CD8-positive, alpha-beta T cell (primary cell): ENCODE measurements at regions of chr2 and their contacts with region 1.

Region 1: GRCh38 chr2:200811336-200812121 is at the start of gene BZW1:
- DNase-seq: peak; percentile 94 to 98 (median 97)
- ATAC-seq: peak; percentile 82
- H3K4me3 ChIP-seq: peak within 1 kb of the TSS; percentile 69 to 90
- H3K4me3 Mint-ChIP-seq: peak within 1 kb of the TSS; percentile 99
- H3K27ac ChIP-seq: peak within 1 kb of the TSS; percentile 98
- H3K27ac Mint-ChIP-seq: peak within 1 kb of the TSS; percentile 98
- H3K4me1 ChIP-seq: peaks cover 33% of the 10 kb centered on the region
- H3K4me1 Mint-ChIP-seq: peaks cover 48% of the 10 kb centered on the region
- H3K27me3 ChIP-seq: no peaks in the 10 kb centered on the region
- H3K27me3 Mint-ChIP-seq: no peaks in the 10 kb centered on the region
- CTCF ChIP-seq: no peak
- total RNA-seq, gene BZW1: 330 to 338 TPM

Region 2: GRCh38 chr2:198945496-198945895 is 1866.0 kb before region 1 on chr2:
- CTCF ChIA-PET with region 1: no interaction called
- POLR2A ChIA-PET with region 1: no interaction called
- intact Hi-C with region 1: no loop called
- DNase-seq: no peak
- ATAC-seq: no peak
- H3K4me3 ChIP-seq: no peak overlapping the region
- H3K4me3 Mint-ChIP-seq: no peak overlapping the region
- H3K27ac ChIP-seq: no peak overlapping the region
- H3K27ac Mint-ChIP-seq: no peak overlapping the region
- H3K4me1 ChIP-seq: no peaks in the 10 kb centered on the region
- H3K4me1 Mint-ChIP-seq: no peaks in the 10 kb centered on the region
- H3K27me3 ChIP-seq: no peaks in the 10 kb centered on the region
- H3K27me3 Mint-ChIP-seq: no peaks in the 10 kb centered on the region
- CTCF ChIP-seq: no peak

Region 3: GRCh38 chr2:198991431-198991830 is 1820.1 kb before region 1 on chr2:
- CTCF ChIA-PET with region 1: no interaction called
- POLR2A ChIA-PET with region 1: no interaction called
- intact Hi-C with region 1: no loop called
- DNase-seq: no peak
- ATAC-seq: no peak
- H3K4me3 ChIP-seq: no peak overlapping the region
- H3K4me3 Mint-ChIP-seq: no peak overlapping the region
- H3K27ac ChIP-seq: no peak overlapping the region
- H3K27ac Mint-ChIP-seq: no peak overlapping the region
- H3K4me1 ChIP-seq: no peaks in the 10 kb centered on the region
- H3K4me1 Mint-ChIP-seq: no peaks in the 10 kb centered on the region
- H3K27me3 ChIP-seq: no peaks in the 10 kb centered on the region
- H3K27me3 Mint-ChIP-seq: no peaks in the 10 kb centered on the region
- CTCF ChIP-seq: no peak

Region 4: GRCh38 chr2:199911052-199911876 is 900.3 kb before region 1 on chr2 and contains the start of gene C2orf69:
- CTCF ChIA-PET with region 1: no interaction called
- POLR2A ChIA-PET with region 1: no interaction called
- intact Hi-C with region 1: loop called in 1 of 2 experiments (anchors 5 kb)
- DNase-seq: peak; percentile 80 to 96 (median 91)
- ATAC-seq: peak; percentile 78
- H3K4me3 ChIP-seq: peak within 1 kb of the TSS; percentile 82 to 83
- H3K4me3 Mint-ChIP-seq: peak within 1 kb of the TSS; percentile 99
- H3K27ac ChIP-seq: peak within 1 kb of the TSS; percentile 84 to 93
- H3K27ac Mint-ChIP-seq: peak within 1 kb of the TSS; percentile 95
- H3K4me1 ChIP-seq: peaks cover 28% of the 10 kb centered on the region
- H3K4me1 Mint-ChIP-seq: peaks cover 38% of the 10 kb centered on the region
- H3K27me3 ChIP-seq: no peaks in the 10 kb centered on the region
- H3K27me3 Mint-ChIP-seq: peaks cover 6% of the 10 kb centered on the region
- CTCF ChIP-seq: no peak
- total RNA-seq, gene C2orf69: 16.3 to 17.5 TPM

Region 5: DNA sequence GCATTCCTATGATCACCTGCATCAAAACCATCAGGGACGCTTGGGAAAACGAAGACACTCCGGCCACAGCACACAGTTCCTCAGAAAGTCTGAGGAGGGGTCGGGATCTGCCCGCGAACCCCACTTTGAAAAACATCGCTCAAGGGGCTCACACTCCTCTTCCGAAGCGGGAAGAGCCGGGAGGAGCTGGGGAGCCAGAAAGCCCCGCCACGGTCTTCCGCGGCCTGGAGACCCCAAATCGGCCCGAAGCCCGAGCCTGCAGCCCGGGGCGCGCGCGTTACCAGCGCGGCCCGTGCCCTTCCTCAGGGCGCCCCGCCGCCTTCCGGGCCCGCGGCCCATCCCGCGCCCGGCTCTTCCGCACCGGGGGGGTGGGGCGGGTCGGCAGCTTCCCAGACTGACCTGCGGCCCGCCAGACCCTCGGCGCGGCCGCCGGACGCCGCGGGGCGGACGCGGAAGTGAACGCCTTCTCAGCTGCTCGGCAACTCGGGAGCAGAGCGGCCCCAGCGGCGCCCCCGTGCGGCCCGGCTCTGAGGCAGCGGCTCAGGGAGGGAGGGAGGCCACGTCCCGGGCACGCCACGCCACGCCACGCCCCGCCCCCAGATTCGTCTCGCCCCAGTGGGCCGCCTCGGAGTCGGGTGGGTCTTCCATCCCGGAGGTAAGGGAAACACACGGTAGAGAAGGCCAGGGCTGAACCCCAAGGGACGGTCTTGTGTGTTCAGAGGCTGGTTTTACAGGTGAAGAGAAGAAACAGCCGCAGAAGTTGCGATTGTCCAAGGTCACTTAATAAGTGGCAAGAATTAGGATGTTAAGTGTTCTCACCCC is 301.7 kb before region 1 on chr2 and contains the start of gene KCTD18:
- CTCF ChIA-PET with region 1: no interaction called
- POLR2A ChIA-PET with region 1: no interaction called
- intact Hi-C with region 1: loop called in 1 of 2 experiments (anchors 5 kb)
- DNase-seq: peak; percentile 83 to 96 (median 93)
- ATAC-seq: peak; percentile 99
- H3K4me3 ChIP-seq: peak within 1 kb of the TSS; percentile 78 to 79
- H3K4me3 Mint-ChIP-seq: peak within 1 kb of the TSS; percentile 91
- H3K27ac ChIP-seq: peak within 1 kb of the TSS; percentile 61 to 71
- H3K27ac Mint-ChIP-seq: peak within 1 kb of the TSS; percentile 93
- H3K4me1 ChIP-seq: peaks cover 25% of the 10 kb centered on the region
- H3K4me1 Mint-ChIP-seq: peaks cover 42% of the 10 kb centered on the region
- H3K27me3 ChIP-seq: peaks cover 0 to 7% of the 10 kb centered on the region in 2 experiments
- H3K27me3 Mint-ChIP-seq: no peaks in the 10 kb centered on the region
- CTCF ChIP-seq: peak; percentile 75
- total RNA-seq, gene KCTD18: 17.9 to 20.4 TPM

Region 6: GRCh38 chr2:200864176-200864976 is 52.8 kb after region 1 on chr2 and contains the start of gene CLK1:
- CTCF ChIA-PET with region 1: no interaction called
- POLR2A ChIA-PET with region 1: interaction called, 36 read pairs
- intact Hi-C with region 1: loop called (anchors 1 kb)
- DNase-seq: peak; percentile 94 to 99 (median 98)
- ATAC-seq: peak; percentile 78
- H3K4me3 ChIP-seq: peak within 1 kb of the TSS; percentile 84 to 98
- H3K4me3 Mint-ChIP-seq: peak within 1 kb of the TSS; percentile 96
- H3K27ac ChIP-seq: peak within 1 kb of the TSS; percentile 98 to 100
- H3K27ac Mint-ChIP-seq: peak within 1 kb of the TSS; percentile 100
- H3K4me1 ChIP-seq: peaks cover 29% of the 10 kb centered on the region
- H3K4me1 Mint-ChIP-seq: peaks cover 43% of the 10 kb centered on the region
- H3K27me3 ChIP-seq: no peaks in the 10 kb centered on the region
- H3K27me3 Mint-ChIP-seq: no peaks in the 10 kb centered on the region
- CTCF ChIP-seq: no peak
- total RNA-seq, gene CLK1: 1,353 to 1,404 TPM

Region 7: GRCh38 chr2:200963124-200963917 is 151.8 kb after region 1 on chr2 and contains the start of gene ORC2:
- CTCF ChIA-PET with region 1: no interaction called
- POLR2A ChIA-PET with region 1: no interaction called
- intact Hi-C with region 1: loop called (anchors 2 to 5 kb)
- DNase-seq: peak; percentile 84 to 96 (median 93)
- ATAC-seq: peak; percentile 94
- H3K4me3 ChIP-seq: peak within 1 kb of the TSS; percentile 70 to 90
- H3K4me3 Mint-ChIP-seq: peak within 1 kb of the TSS; percentile 99
- H3K27ac ChIP-seq: peak within 1 kb of the TSS; percentile 76 to 90
- H3K27ac Mint-ChIP-seq: peak within 1 kb of the TSS; percentile 99
- H3K4me1 ChIP-seq: peaks cover 30% of the 10 kb centered on the region
- H3K4me1 Mint-ChIP-seq: peaks cover 57% of the 10 kb centered on the region
- H3K27me3 ChIP-seq: no peaks in the 10 kb centered on the region
- H3K27me3 Mint-ChIP-seq: no peaks in the 10 kb centered on the region
- CTCF ChIP-seq: peak; percentile 51
- total RNA-seq, gene ORC2: 17.7 to 21.3 TPM